PC-9 (cell line): ENCODE measurements at regions of chr6 and their contacts with region 1.

Region 1: GRCh38 chr6:41367700-41368099 is 32.3 kb downstream of the NCR2 start:
- DNase-seq: peak; percentile 37 to 58
- H3K4me3 ChIP-seq: no peak overlapping the region
- H3K27ac ChIP-seq: no peak overlapping the region
- H3K4me1 ChIP-seq: 0 out of 2 replicates have a peak, but pooled peaks cover 5% of the 10 kb centered on the region
- H3K27me3 ChIP-seq: peaks cover 24% of the 10 kb centered on the region
- CTCF ChIP-seq: peak; percentile 76

Region 2: DNA sequence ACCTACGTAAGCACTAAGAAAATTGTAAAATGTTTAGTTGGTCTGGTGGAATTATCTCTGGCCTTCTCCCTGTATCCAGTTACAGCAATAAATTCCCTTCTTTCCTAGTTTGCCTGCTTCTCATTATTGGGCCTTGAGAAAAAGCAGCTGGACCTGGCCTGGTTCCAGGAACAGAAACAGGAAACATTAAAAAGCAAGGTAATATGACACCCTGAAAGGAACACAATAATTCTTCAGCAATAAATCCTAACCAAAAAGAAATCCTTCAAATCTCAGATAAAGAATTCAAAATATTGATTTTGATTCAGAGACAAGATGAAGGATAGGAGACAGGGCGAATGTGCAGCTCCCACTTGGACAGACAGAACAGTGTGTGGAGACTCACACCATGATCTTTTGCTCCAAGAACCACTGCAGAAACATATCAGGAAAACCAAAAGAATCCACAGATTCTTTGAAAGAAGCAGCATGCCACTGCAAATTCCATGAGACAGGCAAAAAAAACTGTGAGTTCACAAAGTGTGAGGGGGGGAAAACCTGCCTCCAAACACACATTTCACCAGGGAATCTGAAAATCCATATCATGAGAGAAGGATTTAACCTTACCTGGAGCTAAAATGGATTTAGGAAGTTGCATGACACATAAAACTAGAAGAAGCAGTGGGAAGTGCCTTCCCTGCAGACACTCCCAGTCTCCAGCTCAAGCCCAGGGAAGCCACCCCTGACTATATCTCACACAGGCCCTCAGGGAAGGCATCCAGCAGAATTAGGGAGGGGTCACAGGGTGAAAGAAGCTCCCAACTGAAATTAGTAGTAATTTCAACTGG is 110.1 kb before region 1 on chr6:
- CTCF ChIA-PET with region 1: interaction called, 25 read pairs
- POLR2A ChIA-PET with region 1: no interaction called
- intact Hi-C with region 1: no loop called
- DNase-seq: peak in 1 of 2 experiments; percentile 26
- H3K4me3 ChIP-seq: no peak overlapping the region
- H3K27ac ChIP-seq: no peak overlapping the region
- H3K4me1 ChIP-seq: no peaks in the 10 kb centered on the region; the same call in 1 of the 2 replicates
- H3K27me3 ChIP-seq: no peaks in the 10 kb centered on the region
- CTCF ChIP-seq: no peak

Region 3: GRCh38 chr6:41463062-41463930 is 95.6 kb after region 1 on chr6:
- CTCF ChIA-PET with region 1: no interaction called
- POLR2A ChIA-PET with region 1: no interaction called
- intact Hi-C with region 1: loop called (anchors 2 kb)
- DNase-seq: peak; percentile 37 to 60
- H3K4me3 ChIP-seq: no peak overlapping the region
- H3K27ac ChIP-seq: no peak overlapping the region
- H3K4me1 ChIP-seq: peaks cover 11% of the 10 kb centered on the region
- H3K27me3 ChIP-seq: peaks cover 23% of the 10 kb centered on the region; the same call in 1 of the 2 replicates
- CTCF ChIP-seq: peak; percentile 53

Region 4: DNA sequence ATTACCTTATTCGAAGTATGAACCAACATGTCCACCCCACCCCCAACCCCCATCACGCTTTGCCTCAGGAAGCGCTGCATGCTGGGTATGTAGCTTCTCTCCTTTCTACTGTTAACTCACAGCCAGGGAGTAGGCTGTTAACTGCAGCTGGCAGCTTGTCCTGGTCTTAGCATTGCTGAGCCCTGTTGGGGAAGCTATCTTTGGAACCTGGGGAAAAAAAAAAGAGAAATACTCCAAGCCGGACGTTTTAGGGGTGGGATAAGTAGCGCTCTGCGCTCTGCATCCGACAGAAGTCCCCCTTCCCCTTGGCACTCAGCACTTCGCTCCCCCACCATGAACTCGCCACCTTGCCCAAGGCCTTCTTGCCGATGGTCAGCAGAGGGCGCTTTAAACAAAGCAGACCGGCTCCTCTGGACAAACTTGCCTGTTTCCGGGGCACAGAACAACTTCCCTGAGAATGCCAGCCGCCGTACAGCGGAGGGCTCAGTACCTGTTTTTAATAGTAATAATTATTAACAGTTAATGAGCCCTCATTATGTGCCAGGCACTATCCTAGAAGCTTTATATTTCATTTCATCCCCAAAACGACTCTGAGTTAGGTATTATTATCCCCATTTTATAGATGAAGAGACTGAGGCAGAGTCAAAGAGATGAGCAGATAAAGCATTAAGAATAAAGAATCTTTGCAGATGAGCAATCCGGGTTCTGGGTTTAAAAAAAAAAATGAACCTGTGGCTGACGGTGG is 235.3 kb after region 1 on chr6:
- CTCF ChIA-PET with region 1: interaction called, 4 read pairs
- POLR2A ChIA-PET with region 1: interaction called, 3 read pairs
- intact Hi-C with region 1: loop called (anchors 1 kb)
- DNase-seq: peak; percentile 62 to 76
- H3K4me3 ChIP-seq: no peak overlapping the region; the same call in 1 of the 2 replicates
- H3K27ac ChIP-seq: no peak overlapping the region
- H3K4me1 ChIP-seq: no peaks in the 10 kb centered on the region
- H3K27me3 ChIP-seq: no peaks in the 10 kb centered on the region
- CTCF ChIP-seq: peak; percentile 92

Region 5: GRCh38 chr6:41655711-41656691 is 288.3 kb after region 1 on chr6:
- CTCF ChIA-PET with region 1: no interaction called
- POLR2A ChIA-PET with region 1: no interaction called
- intact Hi-C with region 1: no loop called
- DNase-seq: no peak
- H3K4me3 ChIP-seq: no peak overlapping the region
- H3K27ac ChIP-seq: no peak overlapping the region
- H3K4me1 ChIP-seq: 0 out of 2 replicates have a peak, but pooled peaks cover 8% of the 10 kb centered on the region
- H3K27me3 ChIP-seq: peaks cover 23% of the 10 kb centered on the region
- CTCF ChIP-seq: no peak

Region 6: GRCh38 chr6:42901536-42901957 is 1533.8 kb after region 1 on chr6:
- CTCF ChIA-PET with region 1: no interaction called
- POLR2A ChIA-PET with region 1: no interaction called
- intact Hi-C with region 1: loop called (anchors 5 kb)
- DNase-seq: peak; percentile 68 to 77
- H3K4me3 ChIP-seq: no peak overlapping the region
- H3K27ac ChIP-seq: no peak overlapping the region
- H3K4me1 ChIP-seq: no peaks in the 10 kb centered on the region
- H3K27me3 ChIP-seq: peaks cover 4% of the 10 kb centered on the region; the same call in 1 of the 2 replicates
- CTCF ChIP-seq: peak; percentile 95